H1 (cell line): ENCODE measurements at regions of chr6 and their contacts with region 1.

Region 1: DNA sequence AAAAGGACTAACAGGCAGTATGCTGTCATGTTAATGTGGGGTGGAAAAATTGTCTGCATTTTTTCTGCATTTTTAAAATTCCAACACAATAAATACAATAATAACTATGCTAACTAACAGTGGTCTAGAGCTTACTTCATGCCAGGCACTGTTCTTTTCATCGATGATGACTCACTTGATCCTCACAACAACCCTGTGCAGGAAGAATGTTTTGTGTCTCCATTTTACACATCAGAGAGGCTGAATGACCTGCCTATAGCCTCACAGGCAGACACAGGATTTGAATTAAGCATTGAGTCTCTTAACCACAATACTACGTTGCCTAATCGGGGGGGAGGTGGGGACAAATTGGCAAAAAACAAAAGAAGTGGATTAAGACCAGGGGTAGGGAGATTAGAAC is 26.9 kb upstream of the FANCE start:
- DNase-seq: no peak
- H3K4me3 ChIP-seq: no peak overlapping the region
- H3K27ac ChIP-seq: 0 out of 2 replicates have a peak overlapping the region, but pooled peaks have one; percentile 9
- H3K4me1 ChIP-seq: peaks cover 6 to 28% (median 16%) of the 10 kb centered on the region in 4 experiments
- H3K27me3 ChIP-seq: no peaks in the 10 kb centered on the region
- CTCF ChIP-seq: no peak
- EP300 ChIP-seq: no peak
- POLR2A ChIP-seq: no peak
- RAD21 ChIP-seq: no peak

Region 2: GRCh38 chr6:35108309-35108885 is 316.9 kb before region 1 on chr6:
- CTCF ChIA-PET with region 1: no interaction called
- POLR2A ChIA-PET with region 1: no interaction called
- DNase-seq: no peak
- H3K4me3 ChIP-seq: no peak overlapping the region
- H3K27ac ChIP-seq: no peak overlapping the region
- H3K4me1 ChIP-seq: no peaks in the 10 kb centered on the region
- H3K27me3 ChIP-seq: no peaks in the 10 kb centered on the region
- CTCF ChIP-seq: no peak
- EP300 ChIP-seq: no peak
- POLR2A ChIP-seq: no peak
- RAD21 ChIP-seq: no peak

Region 3: DNA sequence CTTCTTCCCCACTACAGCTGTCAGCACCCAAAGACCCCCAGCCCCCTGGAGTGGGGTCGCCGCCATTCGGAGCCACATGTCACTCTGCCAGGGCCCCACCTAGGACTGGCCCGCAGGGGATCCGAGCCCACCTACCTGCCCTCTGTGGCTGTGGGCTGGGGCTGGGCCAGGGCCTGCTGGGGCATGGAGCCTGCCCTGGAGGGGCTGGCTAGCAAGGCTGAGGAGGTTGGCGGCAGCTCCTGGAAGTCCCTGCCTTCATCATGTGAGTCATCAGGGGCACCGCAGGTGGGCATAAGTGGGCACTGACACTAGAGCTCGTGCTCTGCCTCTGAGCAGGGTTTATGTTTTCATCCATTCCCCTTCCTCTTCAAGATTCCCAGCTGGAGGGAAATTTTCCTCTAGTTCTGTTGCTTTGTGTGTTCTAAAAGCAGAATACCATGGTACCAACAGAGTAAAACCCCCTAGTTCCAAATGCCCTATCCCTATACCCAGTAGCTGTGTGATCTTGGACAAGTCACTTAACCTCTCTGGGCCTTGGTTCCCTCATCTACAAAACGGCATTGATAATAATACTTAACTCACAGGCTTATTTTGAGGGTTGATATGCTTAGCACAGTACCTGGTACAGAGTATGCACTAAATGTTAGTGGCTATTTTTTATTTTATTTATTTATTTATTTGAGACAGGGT is 18.2 kb after region 1 on chr6:
- CTCF ChIA-PET with region 1: interaction called, 138 read pairs
- POLR2A ChIA-PET with region 1: interaction called, 3 read pairs
- DNase-seq: no peak
- H3K4me3 ChIP-seq: no peak overlapping the region
- H3K27ac ChIP-seq: no peak overlapping the region
- H3K4me1 ChIP-seq: no peaks in the 10 kb centered on the region
- H3K27me3 ChIP-seq: no peaks in the 10 kb centered on the region
- CTCF ChIP-seq: no peak
- EP300 ChIP-seq: no peak
- POLR2A ChIP-seq: no peak
- RAD21 ChIP-seq: no peak

Region 4: DNA sequence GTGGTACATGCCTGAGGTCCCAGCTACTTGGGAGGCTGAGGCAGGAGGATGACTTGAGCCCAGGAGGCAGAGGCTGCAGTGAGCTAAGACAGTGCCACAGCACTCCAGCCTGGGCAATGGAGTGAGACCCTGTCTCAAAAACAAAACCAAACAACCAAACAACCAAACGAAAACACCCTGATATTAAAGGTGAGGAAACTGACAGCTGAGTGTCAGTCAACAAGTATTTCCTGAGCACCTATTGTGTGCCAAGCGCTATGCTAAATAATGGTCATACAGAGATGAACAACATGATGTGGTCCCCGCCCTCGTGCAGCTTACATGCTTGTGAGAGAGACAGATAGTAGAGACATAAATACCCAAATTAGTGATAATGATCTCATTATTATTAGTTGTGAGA is 89.3 kb after region 1 on chr6:
- CTCF ChIA-PET with region 1: no interaction called
- POLR2A ChIA-PET with region 1: no interaction called
- DNase-seq: no peak
- H3K4me3 ChIP-seq: no peak overlapping the region
- H3K27ac ChIP-seq: no peak overlapping the region
- H3K4me1 ChIP-seq: peaks cover 0 to 25% (median 17%) of the 10 kb centered on the region in 4 experiments; a peak in 6 of 7 replicates
- H3K27me3 ChIP-seq: peaks cover 0 to 14% (median 6%) of the 10 kb centered on the region in 4 experiments; a peak in 5 of 7 replicates
- CTCF ChIP-seq: no peak
- EP300 ChIP-seq: no peak
- POLR2A ChIP-seq: no peak
- RAD21 ChIP-seq: no peak

Region 5: DNA sequence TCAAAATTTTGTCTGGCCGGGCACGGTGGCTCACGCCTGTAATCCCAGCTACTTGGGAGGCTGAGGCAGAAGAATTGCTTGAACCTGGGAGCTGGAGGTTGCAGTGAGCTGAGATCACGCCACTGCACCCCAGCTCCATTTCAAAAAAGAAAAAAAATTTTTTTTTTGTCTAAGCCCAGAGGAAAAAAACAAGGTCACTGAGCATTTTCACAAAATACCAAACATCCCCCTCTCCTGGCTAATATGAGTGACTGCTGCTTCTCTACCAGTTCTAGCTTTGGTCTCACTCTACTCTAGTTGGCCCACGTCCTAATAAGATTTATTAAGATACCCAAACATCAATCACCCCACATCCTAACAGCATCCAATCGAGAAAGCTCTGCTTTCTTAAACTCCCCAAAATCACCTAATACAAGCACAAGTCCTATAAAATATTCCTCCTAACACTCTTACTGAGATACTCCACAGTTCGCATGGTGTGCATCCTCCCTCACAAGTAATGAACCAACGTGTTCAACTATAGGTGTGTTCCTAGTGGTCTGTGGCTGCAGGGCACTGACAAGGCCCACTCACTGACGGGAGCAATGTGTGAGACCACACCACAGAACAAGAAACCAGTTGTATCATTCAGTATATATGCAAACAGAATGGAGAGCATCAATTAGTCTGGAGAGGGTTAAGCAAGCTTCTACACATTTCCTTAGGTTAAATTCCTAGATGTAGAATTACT is 199.2 kb after region 1 on chr6:
- CTCF ChIA-PET with region 1: no interaction called
- POLR2A ChIA-PET with region 1: no interaction called
- DNase-seq: no peak
- H3K4me3 ChIP-seq: no peak overlapping the region
- H3K27ac ChIP-seq: no peak overlapping the region
- H3K4me1 ChIP-seq: no peaks in the 10 kb centered on the region
- H3K27me3 ChIP-seq: no peaks in the 10 kb centered on the region
- CTCF ChIP-seq: peak in 2 of 3 experiments; percentile 28 to 40; a peak in 2 of 4 replicates
- EP300 ChIP-seq: no peak
- POLR2A ChIP-seq: no peak
- RAD21 ChIP-seq: peak in 1 of 2 experiments; percentile 39; a peak in 2 of 4 replicates